ENCODE measurements at regions of chr6 and their contacts with region 1.

Region 1: GRCh38 chr6:83417880-83418663 is 12.8 kb downstream of the ME1 start:
- DNase-seq: peak; percentile 14
- H3K4me3 ChIP-seq: no peak overlapping the region
- CTCF ChIP-seq: peak; percentile 60

Region 2: GRCh38 chr6:83221889-83222479 is 196.1 kb before region 1 on chr6:
- CTCF ChIA-PET with region 1: interaction called, 18 read pairs
- POLR2A ChIA-PET with region 1: no interaction called
- DNase-seq: no peak
- H3K4me3 ChIP-seq: no peak overlapping the region
- CTCF ChIP-seq: peak; percentile 4

Region 3: DNA sequence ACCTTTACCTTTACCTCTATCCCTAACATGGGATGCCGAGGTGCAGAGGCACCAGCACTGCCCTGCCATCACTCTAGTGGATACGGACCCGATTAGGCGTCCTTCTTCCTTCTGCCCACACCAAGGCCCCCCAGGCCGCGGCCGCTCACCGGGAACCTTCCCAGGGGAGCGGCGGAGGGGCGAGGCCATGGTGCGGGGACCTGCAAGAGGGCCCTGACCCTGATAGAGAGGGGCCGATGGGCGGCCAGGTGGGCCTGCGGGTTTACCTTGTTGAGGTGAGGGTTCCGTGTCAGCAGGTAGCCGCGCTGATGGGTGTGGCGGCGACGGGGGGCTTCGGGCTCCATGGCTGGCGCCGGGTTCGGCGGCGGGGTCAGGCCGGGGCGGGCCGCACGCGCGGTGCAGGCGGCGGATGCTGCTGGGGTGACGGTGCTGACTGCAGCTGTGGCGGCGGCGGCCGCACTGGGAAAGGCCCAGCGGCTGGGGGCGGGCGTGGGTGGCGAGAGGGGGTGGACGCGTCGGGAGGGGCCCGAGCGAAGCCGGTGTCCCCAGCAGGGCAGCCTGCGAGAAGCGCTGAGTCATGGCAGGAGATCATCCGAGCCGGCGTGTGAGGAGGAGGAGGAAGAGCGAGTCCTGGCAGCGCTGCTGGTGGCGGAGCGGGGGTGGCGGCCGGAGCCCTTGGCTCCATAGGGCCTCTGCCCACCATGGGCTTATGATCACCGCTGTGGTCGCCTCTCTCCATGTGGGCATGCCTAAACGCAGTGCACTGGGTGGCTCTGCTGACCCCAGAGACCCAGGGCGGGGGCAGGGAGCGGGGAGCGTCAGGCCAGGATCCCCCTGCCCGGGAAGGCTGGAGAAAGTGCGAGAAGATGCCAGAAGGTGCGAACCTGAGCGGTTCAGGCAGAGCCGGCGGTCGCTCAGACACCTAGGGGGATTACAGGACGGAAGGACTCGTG is 12.8 kb after region 1 on chr6 and contains the start of gene ME1:
- CTCF ChIA-PET with region 1: interaction called, 12 read pairs
- POLR2A ChIA-PET with region 1: no interaction called
- DNase-seq: peak; percentile 17
- H3K4me3 ChIP-seq: peak within 1 kb of the TSS; percentile 69
- CTCF ChIP-seq: no peak

Region 4: DNA sequence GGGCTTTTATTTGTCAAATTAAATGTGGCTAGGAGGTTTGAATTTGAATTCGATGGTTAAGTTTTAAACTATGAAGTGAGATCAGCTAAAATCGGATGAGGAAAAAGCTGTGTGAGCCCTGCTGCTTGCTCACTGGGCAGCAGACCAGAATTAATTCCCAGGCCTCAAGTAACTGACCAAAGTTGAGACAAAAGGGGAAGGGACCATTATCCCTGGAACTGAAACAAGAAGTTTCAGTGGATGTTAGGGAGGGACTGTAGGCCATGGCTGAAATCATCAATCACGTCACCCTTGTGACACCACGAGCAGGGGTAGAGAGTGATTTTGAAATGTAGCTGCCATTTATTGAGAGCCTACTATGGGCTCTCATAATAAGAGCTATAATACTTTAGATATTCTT is 87.3 kb after region 1 on chr6:
- CTCF ChIA-PET with region 1: interaction called, 305 read pairs
- POLR2A ChIA-PET with region 1: no interaction called
- DNase-seq: no peak
- H3K4me3 ChIP-seq: no peak overlapping the region
- CTCF ChIP-seq: no peak

Region 5: DNA sequence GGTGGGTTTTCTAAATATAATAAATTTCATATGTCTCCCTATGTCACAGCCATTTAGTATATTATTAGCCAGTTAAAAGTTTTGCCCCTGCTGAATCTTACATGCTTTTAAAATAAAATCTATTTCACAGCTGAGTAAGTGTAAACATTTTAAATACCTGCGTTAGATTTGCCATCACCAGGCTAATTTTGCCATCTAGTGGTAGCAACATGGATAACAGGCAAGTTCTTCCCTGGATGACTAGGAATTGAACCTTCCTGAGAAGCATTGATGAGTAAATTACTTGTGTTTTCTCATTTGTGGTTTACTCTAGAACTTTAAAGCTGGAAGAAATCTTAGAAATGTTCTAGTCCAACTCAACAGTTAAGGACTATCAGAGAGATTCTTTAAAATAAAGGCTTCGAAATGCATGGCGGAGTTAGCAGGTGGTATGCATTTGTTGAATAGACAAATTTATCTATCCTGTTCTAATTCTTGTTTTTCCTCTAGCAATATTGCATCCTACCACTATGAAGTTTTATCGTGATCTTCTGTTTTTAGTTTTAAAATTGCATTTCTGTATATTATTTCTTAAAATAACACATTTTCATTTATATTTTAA is 96.9 kb after region 1 on chr6:
- CTCF ChIA-PET with region 1: interaction called, 305 read pairs
- POLR2A ChIA-PET with region 1: no interaction called
- DNase-seq: peak; percentile 7
- H3K4me3 ChIP-seq: no peak overlapping the region
- CTCF ChIP-seq: peak; percentile 68